ENCODE measurements at regions of chr17 and their contacts with region 1.

Region 1: DNA sequence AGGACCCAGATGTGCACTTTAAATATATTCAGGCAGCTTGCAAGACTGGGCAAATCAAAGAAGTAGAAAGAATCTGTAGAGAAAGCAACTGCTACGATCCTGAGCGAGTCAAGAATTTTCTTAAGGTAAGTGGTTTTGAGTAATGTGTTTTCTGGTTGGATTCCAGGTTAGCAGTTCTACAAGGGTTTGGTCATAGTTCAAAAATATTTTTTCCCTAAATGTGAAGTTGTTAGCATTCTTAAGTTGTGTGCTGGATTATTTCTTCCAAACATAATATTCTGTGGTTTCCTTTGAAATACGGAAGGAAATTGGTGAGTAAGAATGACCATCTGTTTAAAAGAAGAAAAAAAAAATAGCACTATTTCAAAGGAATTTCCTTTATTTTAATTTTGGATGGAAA is 38.4 kb downstream of the PTRH2 start:
- DNase-seq: no peak
- ATAC-seq: no peak
- H3K4me3 ChIP-seq: no peak overlapping the region
- H3K27ac ChIP-seq: peak overlapping the region; percentile 52; the same call in 1 of the 2 replicates
- H3K4me1 ChIP-seq: peaks cover 8% of the 10 kb centered on the region
- H3K27me3 ChIP-seq: no peaks in the 10 kb centered on the region
- CTCF ChIP-seq: no peak
- EP300 ChIP-seq: no peak
- POLR2A ChIP-seq: no peak
- RAD21 ChIP-seq: no peak

Region 2: GRCh38 chr17:58913585-58914444 is 755.0 kb before region 1 on chr17:
- CTCF ChIA-PET with region 1: no interaction called
- POLR2A ChIA-PET with region 1: no interaction called
- RAD21 ChIA-PET with region 1: no interaction called
- SMC1A ChIA-PET with region 1: no interaction called
- in situ Hi-C with region 1: no loop called
- intact Hi-C with region 1: no loop called
- DNase-seq: no peak
- ATAC-seq: no peak
- H3K4me3 ChIP-seq: no peak overlapping the region
- H3K27ac ChIP-seq: no peak overlapping the region
- H3K4me1 ChIP-seq: no peaks in the 10 kb centered on the region
- H3K27me3 ChIP-seq: no peaks in the 10 kb centered on the region
- CTCF ChIP-seq: no peak
- EP300 ChIP-seq: no peak
- POLR2A ChIP-seq: no peak
- RAD21 ChIP-seq: no peak

Region 3: GRCh38 chr17:59641799-59642489 is 26.9 kb before region 1 on chr17:
- CTCF ChIA-PET with region 1: interaction called, 3 read pairs
- POLR2A ChIA-PET with region 1: interaction called, 3 read pairs
- RAD21 ChIA-PET with region 1: interaction called, 29 read pairs
- SMC1A ChIA-PET with region 1: interaction called, 23 read pairs
- in situ Hi-C with region 1: no loop called
- intact Hi-C with region 1: no loop called
- DNase-seq: peak; percentile 63
- ATAC-seq: peak; percentile 93
- H3K4me3 ChIP-seq: 0 out of 2 replicates have a peak overlapping the region, but pooled peaks have one; percentile 18
- H3K27ac ChIP-seq: 0 out of 2 replicates have a peak overlapping the region, but pooled peaks have one; percentile 28
- H3K4me1 ChIP-seq: peaks cover 22% of the 10 kb centered on the region
- H3K27me3 ChIP-seq: no peaks in the 10 kb centered on the region
- CTCF ChIP-seq: no peak
- EP300 ChIP-seq: peak; percentile 53 to 68; a peak in 3 of 4 replicates
- POLR2A ChIP-seq: no peak
- RAD21 ChIP-seq: no peak

Region 4: GRCh38 chr17:59688008-59688407 is 19.2 kb after region 1 on chr17:
- CTCF ChIA-PET with region 1: interaction called, 11 read pairs
- POLR2A ChIA-PET with region 1: no interaction called
- RAD21 ChIA-PET with region 1: interaction called, 5 read pairs
- SMC1A ChIA-PET with region 1: interaction called, 36 read pairs
- in situ Hi-C with region 1: no loop called
- intact Hi-C with region 1: no loop called
- DNase-seq: no peak
- ATAC-seq: 0 out of 3 replicates have a peak, but pooled peaks have one; percentile 22
- H3K4me3 ChIP-seq: no peak overlapping the region
- H3K27ac ChIP-seq: no peak overlapping the region
- H3K4me1 ChIP-seq: no peaks in the 10 kb centered on the region
- H3K27me3 ChIP-seq: no peaks in the 10 kb centered on the region
- CTCF ChIP-seq: no peak
- EP300 ChIP-seq: no peak
- POLR2A ChIP-seq: no peak
- RAD21 ChIP-seq: no peak

Region 5: DNA sequence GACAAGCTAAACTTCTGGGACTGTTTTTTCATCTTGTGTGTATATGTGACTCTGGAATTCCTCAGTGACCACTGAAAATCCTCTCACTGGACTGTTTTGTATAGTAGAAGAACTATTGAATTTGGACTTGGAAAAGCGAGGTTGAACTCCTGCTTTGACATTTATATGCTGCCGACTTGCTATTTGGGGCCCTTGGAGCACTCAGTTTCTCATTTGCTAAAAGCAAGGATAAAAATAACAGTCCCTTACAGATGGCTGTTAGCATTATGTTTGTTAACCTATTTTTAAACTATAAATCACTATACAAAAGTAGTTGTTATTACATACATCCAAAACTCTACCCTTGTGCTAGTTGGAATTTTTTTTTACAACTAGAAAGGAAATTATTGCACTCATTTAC is 47.6 kb after region 1 on chr17:
- CTCF ChIA-PET with region 1: no interaction called
- POLR2A ChIA-PET with region 1: no interaction called
- RAD21 ChIA-PET with region 1: no interaction called
- SMC1A ChIA-PET with region 1: no interaction called
- in situ Hi-C with region 1: no loop called
- intact Hi-C with region 1: no loop called
- DNase-seq: no peak
- ATAC-seq: no peak
- H3K4me3 ChIP-seq: no peak overlapping the region
- H3K27ac ChIP-seq: no peak overlapping the region
- H3K4me1 ChIP-seq: no peaks in the 10 kb centered on the region
- H3K27me3 ChIP-seq: no peaks in the 10 kb centered on the region
- CTCF ChIP-seq: no peak
- EP300 ChIP-seq: no peak
- POLR2A ChIP-seq: no peak
- RAD21 ChIP-seq: no peak

Measured in GM12878 (cell line).